CD4-positive, alpha-beta T cell (primary cell): ENCODE measurements at regions of chr4 and their contacts with region 1.

Region 1: DNA sequence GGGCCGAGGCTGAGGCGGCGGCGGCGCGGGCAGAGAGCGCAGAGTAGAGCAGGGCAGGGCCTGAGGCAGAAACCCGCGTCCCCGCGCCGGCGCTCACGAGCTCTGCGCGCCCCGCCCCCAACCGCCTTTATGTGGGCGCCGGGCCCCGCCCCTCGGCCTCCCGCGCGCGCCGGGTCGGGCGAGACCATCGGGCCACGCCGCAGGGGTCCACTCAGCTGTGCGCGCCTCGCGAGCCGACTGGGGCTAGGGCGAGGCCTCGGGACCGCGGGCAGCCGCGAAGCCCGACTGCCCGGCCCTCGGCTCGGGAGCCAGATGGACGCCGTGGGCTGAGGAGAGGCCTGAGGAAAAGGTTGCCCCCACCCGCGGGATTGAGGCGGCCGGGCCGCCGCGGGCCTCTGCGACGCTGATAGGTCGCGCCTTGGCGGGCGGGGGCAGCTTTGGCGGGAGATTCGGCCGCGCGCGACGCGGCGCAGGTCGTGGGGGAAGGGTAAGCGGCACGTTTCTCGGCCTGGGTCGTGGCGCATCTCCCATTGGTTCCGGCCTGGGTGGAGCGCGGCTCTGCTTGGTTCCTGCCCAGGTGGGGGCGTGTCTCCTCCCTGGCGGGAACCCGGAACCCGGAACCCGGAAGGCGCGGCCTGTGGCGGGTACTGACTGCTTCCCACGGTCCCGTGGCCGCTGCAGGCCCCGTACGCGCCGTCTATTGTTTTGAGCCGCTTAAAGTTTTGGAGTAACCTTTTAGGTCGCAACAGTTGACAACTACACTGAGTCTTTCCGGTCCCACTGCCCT is at the start of gene SLBP:
- DNase-seq: peak; percentile 98 to 99 (median 99)
- ATAC-seq: peak; percentile 86
- H3K4me3 ChIP-seq: peak within 1 kb of the TSS; percentile 95
- H3K4me3 Mint-ChIP-seq: peak within 1 kb of the TSS; percentile 89
- H3K27ac ChIP-seq: peak within 1 kb of the TSS; percentile 79 to 91
- H3K27ac Mint-ChIP-seq: peak within 1 kb of the TSS; percentile 93
- H3K4me1 ChIP-seq: peaks cover 60% of the 10 kb centered on the region
- H3K4me1 Mint-ChIP-seq: peaks cover 49% of the 10 kb centered on the region
- H3K27me3 ChIP-seq: no peaks in the 10 kb centered on the region
- H3K27me3 Mint-ChIP-seq: no peaks in the 10 kb centered on the region
- CTCF ChIP-seq: no peak
- total RNA-seq, gene SLBP: 45.8 to 47.6 TPM

Region 2: GRCh38 chr4:1533401-1534064 is 178.9 kb before region 1 on chr4:
- CTCF ChIA-PET with region 1: no interaction called
- POLR2A ChIA-PET with region 1: no interaction called
- intact Hi-C with region 1: no loop called
- DNase-seq: no peak
- ATAC-seq: no peak
- H3K4me3 ChIP-seq: no peak overlapping the region
- H3K4me3 Mint-ChIP-seq: no peak overlapping the region
- H3K27ac ChIP-seq: no peak overlapping the region
- H3K27ac Mint-ChIP-seq: no peak overlapping the region
- H3K4me1 ChIP-seq: no peaks in the 10 kb centered on the region
- H3K4me1 Mint-ChIP-seq: no peaks in the 10 kb centered on the region
- H3K27me3 ChIP-seq: peaks cover 15% of the 10 kb centered on the region in 2 experiments
- H3K27me3 Mint-ChIP-seq: peaks cover 16% of the 10 kb centered on the region
- CTCF ChIP-seq: no peak

Region 3: DNA sequence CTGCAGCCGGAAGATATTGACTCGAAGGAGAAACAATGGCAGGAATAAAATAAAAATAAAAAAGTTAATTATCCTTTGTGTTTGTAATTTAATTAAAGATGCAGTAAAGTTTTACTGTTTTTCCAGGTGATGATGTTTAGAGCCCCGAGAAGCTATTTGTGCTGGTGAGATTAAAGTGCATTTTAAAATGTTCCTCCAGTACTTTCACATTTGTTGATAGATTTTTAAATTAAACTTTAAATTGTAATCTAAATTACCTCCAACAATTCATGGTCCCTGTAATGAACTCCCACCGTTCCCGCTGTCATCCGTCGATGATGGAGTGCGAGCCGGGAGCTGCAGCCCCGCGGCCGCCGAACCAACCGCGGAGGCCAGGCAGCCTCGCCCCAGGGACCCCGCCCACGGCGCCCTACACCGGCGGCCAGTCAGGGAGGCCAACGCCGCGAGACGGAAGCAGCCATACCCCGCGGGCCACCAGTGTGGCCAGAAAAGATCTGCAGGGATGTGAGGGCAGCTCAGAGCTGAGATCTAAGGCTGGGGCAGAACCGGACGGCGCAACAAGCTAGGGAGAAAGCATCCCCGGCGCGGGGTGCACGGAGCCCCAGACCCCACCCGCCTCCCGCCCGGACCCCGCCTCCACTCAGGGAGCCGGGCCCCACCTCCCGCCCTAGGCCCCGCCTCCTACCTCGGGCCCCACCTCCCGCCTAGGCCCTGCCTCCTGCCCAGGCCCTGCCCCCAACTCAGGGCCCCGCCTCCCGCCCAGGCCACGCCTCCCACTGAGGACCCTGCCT is 132.3 kb before region 1 on chr4:
- CTCF ChIA-PET with region 1: no interaction called
- POLR2A ChIA-PET with region 1: interaction called, 4 read pairs
- intact Hi-C with region 1: loop called in 1 of 2 experiments (anchors 5 kb)
- DNase-seq: peak; percentile 88 to 97 (median 93)
- ATAC-seq: peak; percentile 82
- H3K4me3 ChIP-seq: peak overlapping the region; percentile 73
- H3K4me3 Mint-ChIP-seq: peak overlapping the region; percentile 86
- H3K27ac ChIP-seq: peak overlapping the region in 1 of 2 donors; percentile 65
- H3K27ac Mint-ChIP-seq: peak overlapping the region; percentile 63
- H3K4me1 ChIP-seq: peaks cover 14% of the 10 kb centered on the region
- H3K4me1 Mint-ChIP-seq: no peaks in the 10 kb centered on the region
- H3K27me3 ChIP-seq: no peaks in the 10 kb centered on the region
- H3K27me3 Mint-ChIP-seq: no peaks in the 10 kb centered on the region
- CTCF ChIP-seq: no peak

Region 4: GRCh38 chr4:1693129-1693896 is 19.1 kb before region 1 on chr4:
- CTCF ChIA-PET with region 1: interaction called, 36 read pairs
- POLR2A ChIA-PET with region 1: interaction called, 47 read pairs
- intact Hi-C with region 1: loop called (anchors 1 kb)
- DNase-seq: peak; percentile 63 to 91 (median 75)
- ATAC-seq: peak; percentile 93
- H3K4me3 ChIP-seq: no peak overlapping the region
- H3K4me3 Mint-ChIP-seq: no peak overlapping the region
- H3K27ac ChIP-seq: peak overlapping the region in 1 of 2 donors; percentile 17
- H3K27ac Mint-ChIP-seq: peak overlapping the region; percentile 68
- H3K4me1 ChIP-seq: peaks cover 5% of the 10 kb centered on the region
- H3K4me1 Mint-ChIP-seq: peaks cover 5% of the 10 kb centered on the region
- H3K27me3 ChIP-seq: no peaks in the 10 kb centered on the region
- H3K27me3 Mint-ChIP-seq: no peaks in the 10 kb centered on the region
- CTCF ChIP-seq: peak; percentile 87

Region 5: GRCh38 chr4:1856042-1856788 is 143.8 kb after region 1 on chr4 and contains the start of gene LETM1:
- CTCF ChIA-PET with region 1: interaction called, 3 read pairs
- POLR2A ChIA-PET with region 1: interaction called, 10 read pairs
- intact Hi-C with region 1: no loop called
- DNase-seq: peak; percentile 81 to 97 (median 91)
- ATAC-seq: peak; percentile 97
- H3K4me3 ChIP-seq: peak within 1 kb of the TSS; percentile 75
- H3K4me3 Mint-ChIP-seq: peak within 1 kb of the TSS; percentile 94
- H3K27ac ChIP-seq: peak within 1 kb of the TSS in 1 of 2 donors; percentile 5
- H3K27ac Mint-ChIP-seq: peak within 1 kb of the TSS; percentile 76
- H3K4me1 ChIP-seq: peaks cover 32% of the 10 kb centered on the region
- H3K4me1 Mint-ChIP-seq: peaks cover 40% of the 10 kb centered on the region
- H3K27me3 ChIP-seq: no peaks in the 10 kb centered on the region
- H3K27me3 Mint-ChIP-seq: no peaks in the 10 kb centered on the region
- CTCF ChIP-seq: no peak
- total RNA-seq, gene LETM1: 21.2 to 25.2 TPM

Region 6: GRCh38 chr4:1928356-1929239 is 216.2 kb after region 1 on chr4:
- CTCF ChIA-PET with region 1: no interaction called
- POLR2A ChIA-PET with region 1: no interaction called
- intact Hi-C with region 1: no loop called
- DNase-seq: peak in 3 of 14 experiments; percentile 24 to 33 (median 31)
- ATAC-seq: peak; percentile 24
- H3K4me3 ChIP-seq: no peak overlapping the region
- H3K4me3 Mint-ChIP-seq: no peak overlapping the region
- H3K27ac ChIP-seq: no peak overlapping the region
- H3K27ac Mint-ChIP-seq: no peak overlapping the region
- H3K4me1 ChIP-seq: no peaks in the 10 kb centered on the region
- H3K4me1 Mint-ChIP-seq: no peaks in the 10 kb centered on the region
- H3K27me3 ChIP-seq: no peaks in the 10 kb centered on the region
- H3K27me3 Mint-ChIP-seq: no peaks in the 10 kb centered on the region
- CTCF ChIP-seq: no peak

Region 7: DNA sequence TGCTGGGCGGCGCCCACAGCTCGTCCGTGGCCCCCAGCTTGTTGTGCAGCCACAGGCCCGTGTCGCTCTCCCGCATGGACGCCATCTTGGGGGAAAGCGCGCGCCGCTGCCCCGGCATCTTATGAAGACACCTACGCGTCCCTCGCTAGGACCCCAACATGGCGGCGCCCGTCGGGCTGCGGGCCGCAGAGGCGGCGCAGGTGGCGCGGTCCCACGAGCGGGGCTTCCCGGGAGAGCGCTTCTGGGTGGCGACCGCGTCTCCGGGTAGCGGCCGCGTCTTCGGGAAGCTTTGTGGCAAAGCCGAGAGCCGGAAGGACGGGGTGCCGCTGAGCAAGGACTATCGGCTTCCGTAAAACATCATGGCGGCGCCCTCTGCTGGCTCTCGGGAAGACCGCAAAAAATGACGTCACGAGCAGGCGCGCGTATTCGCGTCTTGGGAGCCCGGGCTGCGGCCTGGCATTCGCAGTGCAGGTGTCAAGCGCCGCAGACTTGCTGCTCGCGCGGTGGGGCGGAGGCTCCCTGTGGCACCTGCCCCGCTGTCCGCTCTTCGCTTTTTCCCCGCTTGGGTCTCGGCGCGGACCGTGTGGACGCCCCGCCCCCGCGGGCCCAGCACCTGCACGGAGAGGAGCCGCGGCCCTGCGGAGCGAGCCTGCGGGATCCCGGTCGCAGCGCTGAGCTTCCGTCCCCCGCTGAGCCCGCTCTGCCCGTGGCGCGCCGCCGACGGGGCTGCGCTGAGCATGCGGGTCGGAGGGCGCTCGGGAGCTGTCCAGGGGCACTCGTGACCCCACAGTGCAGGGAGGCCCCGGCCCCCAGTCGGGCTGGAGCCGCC is 296.7 kb after region 1 on chr4 and contains the start of gene NELFA:
- CTCF ChIA-PET with region 1: interaction called, 3 read pairs
- POLR2A ChIA-PET with region 1: interaction called, 3 read pairs
- intact Hi-C with region 1: loop called in 1 of 2 experiments (anchors 5 kb)
- DNase-seq: peak; percentile 93 to 98 (median 95)
- ATAC-seq: peak; percentile 79
- H3K4me3 ChIP-seq: peak within 1 kb of the TSS; percentile 87
- H3K4me3 Mint-ChIP-seq: peak within 1 kb of the TSS; percentile 98
- H3K27ac ChIP-seq: peak within 1 kb of the TSS; percentile 97 to 99
- H3K27ac Mint-ChIP-seq: peak within 1 kb of the TSS; percentile 95
- H3K4me1 ChIP-seq: peaks cover 31% of the 10 kb centered on the region
- H3K4me1 Mint-ChIP-seq: peaks cover 39% of the 10 kb centered on the region
- H3K27me3 ChIP-seq: no peaks in the 10 kb centered on the region
- H3K27me3 Mint-ChIP-seq: no peaks in the 10 kb centered on the region
- CTCF ChIP-seq: no peak
- total RNA-seq, gene NELFA: 39.9 to 40.1 TPM

Region 8: GRCh38 chr4:2497931-2498330 is 785.5 kb after region 1 on chr4:
- CTCF ChIA-PET with region 1: no interaction called
- POLR2A ChIA-PET with region 1: no interaction called
- intact Hi-C with region 1: no loop called
- DNase-seq: peak in 3 of 14 experiments; percentile 23 to 46 (median 41)
- ATAC-seq: no peak
- H3K4me3 ChIP-seq: no peak overlapping the region
- H3K4me3 Mint-ChIP-seq: no peak overlapping the region
- H3K27ac ChIP-seq: no peak overlapping the region
- H3K27ac Mint-ChIP-seq: no peak overlapping the region
- H3K4me1 ChIP-seq: no peaks in the 10 kb centered on the region
- H3K4me1 Mint-ChIP-seq: peaks cover 12% of the 10 kb centered on the region
- H3K27me3 ChIP-seq: no peaks in the 10 kb centered on the region
- H3K27me3 Mint-ChIP-seq: no peaks in the 10 kb centered on the region
- CTCF ChIP-seq: no peak